Endothelial cell of umbilical vein (primary cell): ENCODE measurements at regions of chr6 and their contacts with region 1.

Region 1: GRCh38 chr6:74606581-74607071 is 599.2 kb downstream of the COL12A1 start:
- DNase-seq: peak; percentile 86
- H3K4me3 ChIP-seq: no peak overlapping the region
- H3K27ac ChIP-seq: peak overlapping the region; percentile 86
- H3K4me1 ChIP-seq: peaks cover 38% of the 10 kb centered on the region
- H3K27me3 ChIP-seq: no peaks in the 10 kb centered on the region
- CTCF ChIP-seq: no peak
- POLR2A ChIP-seq: no peak

Region 2: GRCh38 chr6:74568861-74569260 is 37.8 kb before region 1 on chr6:
- CTCF ChIA-PET with region 1: interaction called, 10 read pairs
- POLR2A ChIA-PET with region 1: no interaction called
- dilution Hi-C with region 1: no loop called
- intact Hi-C with region 1: loop called (anchors 1 kb)
- DNase-seq: peak; percentile 87
- H3K4me3 ChIP-seq: peak overlapping the region in 1 of 3 experiments; percentile 21
- H3K27ac ChIP-seq: peak overlapping the region; percentile 88
- H3K4me1 ChIP-seq: peaks cover 21% of the 10 kb centered on the region
- H3K27me3 ChIP-seq: no peaks in the 10 kb centered on the region
- CTCF ChIP-seq: no peak
- POLR2A ChIP-seq: no peak

Region 3: GRCh38 chr6:74768120-74768519 is 161.5 kb after region 1 on chr6:
- CTCF ChIA-PET with region 1: no interaction called
- POLR2A ChIA-PET with region 1: no interaction called
- dilution Hi-C with region 1: no loop called
- intact Hi-C with region 1: no loop called
- DNase-seq: no peak
- H3K4me3 ChIP-seq: no peak overlapping the region
- H3K27ac ChIP-seq: no peak overlapping the region
- H3K4me1 ChIP-seq: no peaks in the 10 kb centered on the region
- H3K27me3 ChIP-seq: no peaks in the 10 kb centered on the region
- CTCF ChIP-seq: no peak
- POLR2A ChIP-seq: no peak

Region 4: GRCh38 chr6:74964871-74965441 is 358.3 kb after region 1 on chr6:
- CTCF ChIA-PET with region 1: no interaction called
- POLR2A ChIA-PET with region 1: no interaction called
- dilution Hi-C with region 1: no loop called
- intact Hi-C with region 1: loop called (anchors 10 kb)
- DNase-seq: peak; percentile 30
- H3K4me3 ChIP-seq: no peak overlapping the region
- H3K27ac ChIP-seq: no peak overlapping the region
- H3K4me1 ChIP-seq: peaks cover 9% of the 10 kb centered on the region
- H3K27me3 ChIP-seq: no peaks in the 10 kb centered on the region
- CTCF ChIP-seq: peak; percentile 0 to 8
- POLR2A ChIP-seq: no peak

Region 5: GRCh38 chr6:75081921-75082320 is 475.3 kb after region 1 on chr6:
- CTCF ChIA-PET with region 1: no interaction called
- POLR2A ChIA-PET with region 1: no interaction called
- dilution Hi-C with region 1: no loop called
- intact Hi-C with region 1: no loop called
- DNase-seq: no peak
- H3K4me3 ChIP-seq: no peak overlapping the region
- H3K27ac ChIP-seq: no peak overlapping the region
- H3K4me1 ChIP-seq: peaks cover 3% of the 10 kb centered on the region
- H3K27me3 ChIP-seq: no peaks in the 10 kb centered on the region
- CTCF ChIP-seq: no peak
- POLR2A ChIP-seq: no peak

Region 6: GRCh38 chr6:75196081-75196687 is 589.6 kb after region 1 on chr6:
- CTCF ChIA-PET with region 1: no interaction called
- POLR2A ChIA-PET with region 1: no interaction called
- dilution Hi-C with region 1: no loop called
- intact Hi-C with region 1: loop called (anchors 2 kb)
- DNase-seq: peak; percentile 72
- H3K4me3 ChIP-seq: no peak overlapping the region
- H3K27ac ChIP-seq: peak overlapping the region; percentile 45
- H3K4me1 ChIP-seq: peaks cover 6% of the 10 kb centered on the region
- H3K27me3 ChIP-seq: no peaks in the 10 kb centered on the region
- CTCF ChIP-seq: no peak
- POLR2A ChIP-seq: no peak